ENCODE measurements at regions of chr5 and their contacts with region 1.

Region 1: GRCh38 chr5:151252762-151253604 is at the start of gene GM2A:
- DNase-seq: peak; percentile 99
- H3K4me3 Mint-ChIP-seq: peak within 1 kb of the TSS; percentile 85
- H3K27ac Mint-ChIP-seq: peak within 1 kb of the TSS; percentile 84
- H3K4me1 Mint-ChIP-seq: peaks cover 45% of the 10 kb centered on the region
- H3K27me3 Mint-ChIP-seq: no peaks in the 10 kb centered on the region
- total RNA-seq, gene GM2A: 20.4 and 20.9 TPM in 2 replicates

Region 2: GRCh38 chr5:151020304-151021110 is 232.5 kb before region 1 on chr5 and contains the start of gene GPX3:
- intact Hi-C with region 1: no loop called
- DNase-seq: no peak
- H3K4me3 Mint-ChIP-seq: no peak within 1 kb of the TSS
- H3K27ac Mint-ChIP-seq: no peak within 1 kb of the TSS
- H3K4me1 Mint-ChIP-seq: peaks cover 9% of the 10 kb centered on the region
- H3K27me3 Mint-ChIP-seq: peaks cover 5% of the 10 kb centered on the region
- total RNA-seq, gene GPX3: 0.46 TPM in 1 of 2 replicates, not detected in the other

Region 3: GRCh38 chr5:151080623-151081430 is 172.2 kb before region 1 on chr5 and contains the start of gene TNIP1:
- intact Hi-C with region 1: loop called (anchors 2 kb)
- DNase-seq: peak; percentile 93
- H3K4me3 Mint-ChIP-seq: peak within 1 kb of the TSS; percentile 99
- H3K27ac Mint-ChIP-seq: peak within 1 kb of the TSS; percentile 87
- H3K4me1 Mint-ChIP-seq: peaks cover 76% of the 10 kb centered on the region
- H3K27me3 Mint-ChIP-seq: no peaks in the 10 kb centered on the region
- total RNA-seq, gene TNIP1: 473 and 477 TPM in 2 replicates

Region 4: GRCh38 chr5:151213800-151214613 is 39.0 kb before region 1 on chr5:
- intact Hi-C with region 1: loop called (anchors 1 kb)
- DNase-seq: peak; percentile 84
- H3K4me3 Mint-ChIP-seq: peak overlapping the region; percentile 79
- H3K27ac Mint-ChIP-seq: peak overlapping the region; percentile 97
- H3K4me1 Mint-ChIP-seq: peaks cover 75% of the 10 kb centered on the region
- H3K27me3 Mint-ChIP-seq: no peaks in the 10 kb centered on the region

Region 5: DNA sequence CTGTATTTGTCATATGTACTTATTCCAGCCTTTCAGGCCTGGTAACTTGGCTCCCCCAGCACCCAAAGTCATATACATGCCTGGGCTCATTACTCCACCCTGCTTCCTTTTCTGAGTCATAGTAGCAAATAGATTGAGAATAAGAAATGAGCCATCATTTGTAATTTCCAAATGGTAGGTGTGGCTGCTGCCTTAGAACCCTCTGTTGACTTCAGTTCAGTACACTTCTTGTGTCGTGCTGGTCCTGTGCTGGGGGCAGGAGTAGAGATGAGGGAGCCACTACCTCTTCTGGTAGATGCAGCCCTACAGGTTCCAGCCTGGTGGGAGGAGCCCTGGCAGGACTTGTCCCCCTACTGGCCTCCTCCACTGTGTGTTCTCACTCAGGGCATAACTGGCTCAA is 11.1 kb after region 1 on chr5:
- intact Hi-C with region 1: loop called (anchors 1 kb)
- DNase-seq: no peak
- H3K4me3 Mint-ChIP-seq: no peak overlapping the region
- H3K27ac Mint-ChIP-seq: peak overlapping the region; percentile 75
- H3K4me1 Mint-ChIP-seq: peaks cover 12% of the 10 kb centered on the region
- H3K27me3 Mint-ChIP-seq: no peaks in the 10 kb centered on the region

Measured in activated T-helper 2 cell treated with anti-CD3 and anti-CD28 coated beads, Interferon-gamma antibody, Interleukin-2, Interleukin-4, amounts not matched to agents 10 μg/mL and 5 μg/mL and 100 μg/mL, durations not matched to agents 14 hours and 24 hours and 36 hours (primary cell).